ENCODE measurements at regions of chr2 and their contacts with region 1.

Region 1: GRCh38 chr2:88159955-88160415 is 10.2 kb upstream of the THNSL2 start:
- DNase-seq: peak; percentile 58 to 68
- ATAC-seq: peak; percentile 82 to 89
- H3K4me3 ChIP-seq: no peak overlapping the region
- H3K27ac ChIP-seq: no peak overlapping the region
- H3K4me1 ChIP-seq: no peaks in the 10 kb centered on the region
- CTCF ChIP-seq: peak; percentile 93
- EP300 ChIP-seq: no peak
- POLR2A ChIP-seq: no peak
- RAD21 ChIP-seq: peak; percentile 92 to 93

Region 2: GRCh38 chr2:88144914-88145497 is 15.0 kb before region 1 on chr2:
- CTCF ChIA-PET with region 1: interaction called, 10 read pairs
- POLR2A ChIA-PET with region 1: no interaction called
- DNase-seq: no peak
- ATAC-seq: no peak
- H3K4me3 ChIP-seq: no peak overlapping the region
- H3K27ac ChIP-seq: no peak overlapping the region
- H3K4me1 ChIP-seq: no peaks in the 10 kb centered on the region
- CTCF ChIP-seq: no peak
- EP300 ChIP-seq: no peak
- POLR2A ChIP-seq: no peak
- RAD21 ChIP-seq: no peak

Region 3: DNA sequence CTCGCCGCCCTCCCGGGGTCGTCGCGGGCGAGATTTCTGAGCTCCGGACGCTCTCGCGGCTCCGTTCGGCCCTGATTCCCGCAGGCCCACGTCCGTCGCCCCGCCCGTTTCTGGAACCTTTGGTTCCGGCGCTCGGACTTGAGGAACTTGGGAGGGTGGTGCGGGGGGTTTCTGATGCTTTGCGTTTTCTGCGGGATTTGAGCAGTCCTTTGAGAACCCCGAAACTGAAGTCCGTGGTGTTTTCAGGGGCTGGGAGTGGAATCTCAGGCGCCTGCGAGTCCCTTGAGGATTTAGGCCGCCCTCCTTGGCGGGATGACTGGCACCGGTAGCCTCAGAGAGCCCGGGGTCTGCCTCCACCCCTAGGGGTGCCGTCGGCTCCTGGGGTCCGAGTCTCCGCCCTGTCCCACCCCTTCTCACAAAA is 10.5 kb after region 1 on chr2:
- CTCF ChIA-PET with region 1: interaction called, 32 read pairs
- POLR2A ChIA-PET with region 1: no interaction called
- DNase-seq: no peak
- ATAC-seq: no peak
- H3K4me3 ChIP-seq: 0 out of 3 replicates have a peak overlapping the region, but pooled peaks have one; percentile 18
- H3K27ac ChIP-seq: no peak overlapping the region
- H3K4me1 ChIP-seq: no peaks in the 10 kb centered on the region
- CTCF ChIP-seq: no peak
- EP300 ChIP-seq: no peak
- POLR2A ChIP-seq: no peak
- RAD21 ChIP-seq: no peak

Region 4: DNA sequence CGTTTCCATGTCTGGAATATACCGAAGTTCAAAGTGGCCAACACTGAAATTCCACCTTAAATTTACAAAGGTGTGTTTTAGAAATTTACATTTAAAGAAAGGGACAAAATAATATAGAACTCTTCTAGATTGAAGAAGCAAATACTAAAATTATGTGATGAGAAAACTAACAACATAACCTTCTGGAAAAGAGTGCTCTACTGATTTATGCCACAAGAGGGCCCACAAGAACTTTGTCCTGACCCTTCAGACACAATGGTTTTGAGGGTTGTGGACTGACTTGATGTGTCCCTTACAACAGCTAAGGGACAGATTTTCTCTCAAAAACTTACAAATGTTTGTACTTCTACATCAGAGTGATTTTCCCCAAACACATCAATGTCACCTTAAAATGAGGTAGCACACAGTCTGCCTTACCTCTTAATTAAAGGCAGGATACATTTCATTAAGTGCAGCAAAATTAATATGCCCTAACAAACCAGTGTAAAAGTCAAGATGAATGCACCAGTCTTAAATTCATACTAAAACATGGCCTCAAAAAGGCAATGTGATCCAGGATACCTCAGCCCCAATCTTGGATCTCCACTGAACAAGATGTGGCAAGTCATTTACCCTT is 431.1 kb after region 1 on chr2:
- CTCF ChIA-PET with region 1: no interaction called
- POLR2A ChIA-PET with region 1: no interaction called
- DNase-seq: peak; percentile 61 to 73
- ATAC-seq: peak; percentile 90 to 94
- H3K4me3 ChIP-seq: no peak overlapping the region
- H3K27ac ChIP-seq: no peak overlapping the region
- H3K4me1 ChIP-seq: no peaks in the 10 kb centered on the region
- CTCF ChIP-seq: peak; percentile 95
- EP300 ChIP-seq: no peak
- POLR2A ChIP-seq: no peak
- RAD21 ChIP-seq: peak; percentile 89 to 90

Region 5: GRCh38 chr2:88606371-88607030 is 446.5 kb after region 1 on chr2:
- CTCF ChIA-PET with region 1: no interaction called
- POLR2A ChIA-PET with region 1: no interaction called
- DNase-seq: no peak
- ATAC-seq: no peak
- H3K4me3 ChIP-seq: no peak overlapping the region
- H3K27ac ChIP-seq: no peak overlapping the region
- H3K4me1 ChIP-seq: peaks cover 3% of the 10 kb centered on the region; the same call in 1 of the 3 replicates
- CTCF ChIP-seq: no peak
- EP300 ChIP-seq: no peak
- POLR2A ChIP-seq: no peak
- RAD21 ChIP-seq: no peak